Naive thymus-derived CD4-positive, alpha-beta T cell (primary cell): ENCODE measurements at regions of chr2 and their contacts with region 1.

Region 1: GRCh38 chr2:219278655-219279516 is at the start of gene DNAJB2:
- DNase-seq: peak; percentile 94 to 100 (median 98)
- ATAC-seq: peak; percentile 91
- H3K4me3 ChIP-seq: peak within 1 kb of the TSS; percentile 73
- H3K4me3 Mint-ChIP-seq: peak within 1 kb of the TSS; percentile 85 to 99 (median 97)
- H3K27ac ChIP-seq: peak within 1 kb of the TSS; percentile 98
- H3K27ac Mint-ChIP-seq: peak within 1 kb of the TSS; percentile 97 to 100 (median 99)
- H3K4me1 ChIP-seq: peaks cover 22 to 33% of the 10 kb centered on the region in 2 donors
- H3K4me1 Mint-ChIP-seq: peaks cover 32 to 58% (median 53%) of the 10 kb centered on the region in 7 donors
- H3K27me3 ChIP-seq: no peaks in the 10 kb centered on the region
- H3K27me3 Mint-ChIP-seq: peaks cover 0 to 3% (median 0%) of the 10 kb centered on the region in 5 donors
- total RNA-seq, gene DNAJB2: 50.8 to 134 (median 113) TPM

Region 2: DNA sequence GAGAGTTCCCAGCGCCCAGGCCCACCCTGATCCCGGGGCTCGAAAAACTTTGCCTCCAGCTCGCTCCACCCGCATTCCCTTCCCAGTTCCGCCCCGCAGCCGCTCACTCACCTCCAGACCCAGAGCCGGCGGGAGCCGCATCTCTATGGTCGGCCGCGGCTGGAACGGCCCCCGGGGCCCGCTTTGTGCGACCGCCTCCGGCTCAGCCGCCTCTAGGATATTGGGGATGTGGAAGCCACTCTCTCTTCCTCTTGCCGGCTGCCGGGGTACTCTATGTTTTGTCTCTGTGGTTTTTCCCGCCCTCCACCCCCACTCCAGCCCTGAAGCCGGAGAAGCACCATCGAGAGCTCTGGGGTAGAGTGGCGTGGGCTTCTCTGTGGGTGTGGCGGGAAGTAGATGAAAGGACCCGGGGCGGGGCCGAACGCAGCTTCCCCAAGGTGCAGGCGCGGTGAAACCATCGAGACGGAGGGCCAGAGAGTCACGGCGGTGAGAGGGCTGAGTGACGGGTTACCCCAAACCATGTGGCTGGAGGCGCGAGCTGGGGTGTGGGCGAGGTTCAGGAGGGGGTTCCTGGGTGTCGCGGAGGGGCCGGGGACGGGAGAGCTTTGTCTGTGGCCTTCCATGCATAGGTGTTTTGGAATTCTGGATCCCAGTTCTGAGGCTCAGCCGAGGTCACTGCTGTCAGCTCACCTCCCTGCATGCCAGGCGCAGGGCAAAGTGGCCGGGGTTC is 619.5 kb before region 1 on chr2 and contains the starts of genes BCS1L and ZNF142:
- CTCF ChIA-PET with region 1: no interaction called
- POLR2A ChIA-PET with region 1: no interaction called
- intact Hi-C with region 1: loop called in 1 of 2 experiments (anchors 1 kb)
- DNase-seq: peak; percentile 75 to 95 (median 90)
- ATAC-seq: peak; percentile 99
- H3K4me3 ChIP-seq: peak within 1 kb of the TSS; percentile 83
- H3K4me3 Mint-ChIP-seq: peak within 1 kb of the TSS; percentile 90 to 99 (median 98)
- H3K27ac ChIP-seq: peak within 1 kb of the TSS; percentile 80
- H3K27ac Mint-ChIP-seq: peak within 1 kb of the TSS; percentile 74 to 96 (median 93)
- H3K4me1 ChIP-seq: peaks cover 7 to 15% of the 10 kb centered on the region in 2 donors
- H3K4me1 Mint-ChIP-seq: peaks cover 25 to 45% (median 38%) of the 10 kb centered on the region in 7 donors
- H3K27me3 ChIP-seq: no peaks in the 10 kb centered on the region
- H3K27me3 Mint-ChIP-seq: no peaks in the 10 kb centered on the region
- total RNA-seq, gene BCS1L: 21.4 to 62.0 (median 49.0) TPM
- total RNA-seq, gene ZNF142: 38.7 to 49.8 (median 40.8) TPM

Region 3: DNA sequence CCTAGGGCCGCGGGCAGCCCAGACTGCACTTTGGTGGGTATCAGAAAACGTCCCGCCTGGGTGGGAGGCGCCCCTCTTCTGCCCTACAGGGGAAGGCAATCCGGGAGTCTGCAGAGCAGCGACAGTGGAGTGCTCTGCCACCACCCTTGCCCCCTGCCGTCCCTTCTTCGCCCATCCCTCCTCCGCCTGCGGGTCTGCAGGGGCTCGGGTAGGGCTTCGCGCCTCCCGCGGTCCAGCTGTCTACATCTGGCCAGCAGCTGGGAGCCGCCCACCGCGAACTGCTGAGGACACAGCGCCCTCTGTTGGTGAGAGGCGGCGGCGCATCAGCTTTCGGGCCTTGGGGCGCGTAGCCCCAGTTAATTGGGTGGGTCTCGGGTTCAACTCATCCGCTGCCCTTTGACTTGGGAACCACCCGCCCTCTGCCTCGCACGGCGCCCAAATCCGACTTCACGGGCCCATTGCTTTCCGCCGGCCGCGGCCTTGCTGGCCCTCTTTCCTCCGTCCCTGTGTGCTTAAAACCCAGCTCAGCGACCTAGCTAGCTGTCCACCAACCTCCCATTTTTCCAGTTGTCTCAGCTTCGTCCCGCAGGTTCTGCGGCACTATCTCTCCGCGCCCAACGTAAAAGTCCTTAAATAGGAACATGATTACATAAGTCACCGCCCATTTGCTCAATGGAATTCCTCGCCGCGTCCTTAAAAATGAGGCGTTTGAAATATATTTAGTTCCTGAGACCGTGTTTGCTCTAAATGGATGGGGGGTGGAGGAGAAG is 380.6 kb before region 1 on chr2:
- CTCF ChIA-PET with region 1: no interaction called
- POLR2A ChIA-PET with region 1: no interaction called
- intact Hi-C with region 1: loop called in 1 of 2 experiments (anchors 5 kb)
- DNase-seq: peak; percentile 50 to 88 (median 72)
- ATAC-seq: peak; percentile 42
- H3K4me3 ChIP-seq: peak overlapping the region; percentile 65
- H3K4me3 Mint-ChIP-seq: peak overlapping the region; percentile 53 to 87 (median 82)
- H3K27ac ChIP-seq: no peak overlapping the region
- H3K27ac Mint-ChIP-seq: peak overlapping the region in 7 of 9 donors; percentile 33 to 92 (median 71)
- H3K4me1 ChIP-seq: peaks cover 40 to 49% of the 10 kb centered on the region in 2 donors
- H3K4me1 Mint-ChIP-seq: peaks cover 38 to 48% (median 42%) of the 10 kb centered on the region in 7 donors
- H3K27me3 ChIP-seq: peaks cover 0 to 3% of the 10 kb centered on the region in 2 donors
- H3K27me3 Mint-ChIP-seq: peaks cover 20 to 75% (median 40%) of the 10 kb centered on the region in 5 donors

Region 4: GRCh38 chr2:219206442-219207253 is 72.2 kb before region 1 on chr2 and contains the start of gene ZFAND2B:
- CTCF ChIA-PET with region 1: interaction called, 3 read pairs
- POLR2A ChIA-PET with region 1: interaction called, 27 read pairs
- intact Hi-C with region 1: loop called (anchors 1 kb)
- DNase-seq: peak; percentile 92 to 98 (median 96)
- ATAC-seq: peak; percentile 96
- H3K4me3 ChIP-seq: peak within 1 kb of the TSS; percentile 98
- H3K4me3 Mint-ChIP-seq: peak within 1 kb of the TSS; percentile 77 to 98 (median 94)
- H3K27ac ChIP-seq: peak within 1 kb of the TSS; percentile 92
- H3K27ac Mint-ChIP-seq: peak within 1 kb of the TSS; percentile 96 to 99 (median 97)
- H3K4me1 ChIP-seq: peaks cover 20 to 28% of the 10 kb centered on the region in 2 donors
- H3K4me1 Mint-ChIP-seq: peaks cover 15 to 48% (median 43%) of the 10 kb centered on the region in 7 donors
- H3K27me3 ChIP-seq: no peaks in the 10 kb centered on the region
- H3K27me3 Mint-ChIP-seq: no peaks in the 10 kb centered on the region
- total RNA-seq, gene ZFAND2B: 50.1 to 79.5 (median 71.3) TPM

Region 5: GRCh38 chr2:219245148-219245898 is 33.6 kb before region 1 on chr2 and contains the starts of genes GLB1L and STK16:
- CTCF ChIA-PET with region 1: interaction called, 6 read pairs
- POLR2A ChIA-PET with region 1: interaction called, 214 read pairs
- intact Hi-C with region 1: loop called (anchors 1 kb)
- DNase-seq: peak; percentile 76 to 95 (median 85)
- ATAC-seq: peak; percentile 80
- H3K4me3 ChIP-seq: peak within 1 kb of the TSS; percentile 92
- H3K4me3 Mint-ChIP-seq: peak within 1 kb of the TSS; percentile 82 to 100 (median 93)
- H3K27ac ChIP-seq: peak within 1 kb of the TSS; percentile 89
- H3K27ac Mint-ChIP-seq: peak within 1 kb of the TSS; percentile 88 to 99 (median 97)
- H3K4me1 ChIP-seq: peaks cover 52 to 53% of the 10 kb centered on the region in 2 donors
- H3K4me1 Mint-ChIP-seq: peaks cover 26 to 73% (median 59%) of the 10 kb centered on the region in 7 donors
- H3K27me3 ChIP-seq: no peaks in the 10 kb centered on the region
- H3K27me3 Mint-ChIP-seq: peaks cover 0 to 2% (median 0%) of the 10 kb centered on the region in 5 donors
- total RNA-seq, gene GLB1L: 1.9 to 4.5 (median 2.7) TPM
- total RNA-seq, gene STK16: 17.4 to 35.0 (median 21.8) TPM

Region 6: GRCh38 chr2:219352448-219353023 is 73.7 kb after region 1 on chr2:
- CTCF ChIA-PET with region 1: no interaction called
- POLR2A ChIA-PET with region 1: no interaction called
- intact Hi-C with region 1: loop called (anchors 1 kb)
- DNase-seq: peak; percentile 25 to 66 (median 58)
- ATAC-seq: peak; percentile 87
- H3K4me3 ChIP-seq: no peak overlapping the region
- H3K4me3 Mint-ChIP-seq: no peak overlapping the region
- H3K27ac ChIP-seq: no peak overlapping the region
- H3K27ac Mint-ChIP-seq: no peak overlapping the region
- H3K4me1 ChIP-seq: no peaks in the 10 kb centered on the region
- H3K4me1 Mint-ChIP-seq: no peaks in the 10 kb centered on the region
- H3K27me3 ChIP-seq: no peaks in the 10 kb centered on the region
- H3K27me3 Mint-ChIP-seq: peaks cover 43 to 64% (median 48%) of the 10 kb centered on the region in 5 donors

Region 7: GRCh38 chr2:219597552-219598307 is 318.8 kb after region 1 on chr2 and contains the start of gene STK11IP:
- CTCF ChIA-PET with region 1: no interaction called
- POLR2A ChIA-PET with region 1: no interaction called
- intact Hi-C with region 1: loop called in 1 of 2 experiments (anchors 5 kb)
- DNase-seq: peak; percentile 76 to 91 (median 87)
- ATAC-seq: peak; percentile 91
- H3K4me3 ChIP-seq: peak within 1 kb of the TSS; percentile 86
- H3K4me3 Mint-ChIP-seq: peak within 1 kb of the TSS; percentile 89 to 99 (median 96)
- H3K27ac ChIP-seq: peak within 1 kb of the TSS; percentile 80
- H3K27ac Mint-ChIP-seq: peak within 1 kb of the TSS; percentile 93 to 98 (median 94)
- H3K4me1 ChIP-seq: peaks cover 5 to 15% of the 10 kb centered on the region in 2 donors
- H3K4me1 Mint-ChIP-seq: peaks cover 14 to 30% (median 21%) of the 10 kb centered on the region in 7 donors
- H3K27me3 ChIP-seq: no peaks in the 10 kb centered on the region
- H3K27me3 Mint-ChIP-seq: peaks cover 3 to 10% (median 6%) of the 10 kb centered on the region in 5 donors
- total RNA-seq, gene STK11IP: 33.6 to 46.4 (median 42.6) TPM